ENCODE measurements at regions of chr5 and their contacts with region 1.

Region 1: DNA sequence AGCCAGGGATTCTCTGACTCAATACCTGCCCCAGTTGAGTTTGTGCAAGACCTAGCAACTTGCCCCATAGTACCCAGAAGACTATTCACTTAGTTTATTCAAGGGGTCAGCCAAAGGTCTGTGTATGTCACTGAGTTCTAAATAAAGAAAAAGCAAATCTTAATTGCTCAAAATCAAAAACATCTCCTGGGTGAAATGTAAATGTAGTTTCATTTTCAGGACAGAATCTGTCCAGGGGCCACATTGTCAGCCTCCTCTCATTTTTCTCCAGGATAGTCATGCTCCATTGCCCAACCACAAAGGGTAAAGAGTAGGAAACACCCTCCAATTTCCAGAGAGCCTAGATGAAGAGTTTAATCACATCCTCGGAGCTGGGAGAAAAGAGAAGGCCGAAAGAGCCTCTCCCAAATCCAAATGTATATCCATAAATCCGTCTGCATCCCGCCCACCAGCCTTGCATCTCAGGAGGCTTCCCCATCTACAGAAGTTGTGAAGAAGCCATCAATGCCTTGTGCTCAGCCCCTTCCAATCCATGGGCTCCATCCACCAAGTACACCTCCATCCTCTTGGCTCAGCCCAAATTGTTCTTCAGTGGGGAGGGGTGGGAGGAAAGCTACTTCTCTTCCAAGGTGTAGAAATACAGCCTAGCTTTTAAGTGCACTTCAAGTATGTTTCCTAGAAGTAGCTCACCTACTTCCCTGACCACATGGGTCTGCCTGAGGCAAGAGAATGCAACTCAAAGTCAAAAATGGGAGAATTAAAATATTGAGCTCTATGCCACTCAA is 26.9 kb downstream of the ADAM19 start:
- DNase-seq: peak; percentile 88
- H3K4me3 ChIP-seq: peak overlapping the region; percentile 24; the same call in 1 of the 2 replicates
- CTCF ChIP-seq: no peak

Region 2: GRCh38 chr5:157563373-157563928 is 14.7 kb after region 1 on chr5:
- CTCF ChIA-PET with region 1: interaction called, 10 read pairs
- POLR2A ChIA-PET with region 1: interaction called, 6 read pairs
- DNase-seq: peak; percentile 83
- H3K4me3 ChIP-seq: no peak overlapping the region
- CTCF ChIP-seq: no peak

Measured in AG04449 (cell line).